Heart right ventricle (tissue), 16 donors: ENCODE measurements at regions of chr9 and their contacts with region 1.

Region 1: DNA sequence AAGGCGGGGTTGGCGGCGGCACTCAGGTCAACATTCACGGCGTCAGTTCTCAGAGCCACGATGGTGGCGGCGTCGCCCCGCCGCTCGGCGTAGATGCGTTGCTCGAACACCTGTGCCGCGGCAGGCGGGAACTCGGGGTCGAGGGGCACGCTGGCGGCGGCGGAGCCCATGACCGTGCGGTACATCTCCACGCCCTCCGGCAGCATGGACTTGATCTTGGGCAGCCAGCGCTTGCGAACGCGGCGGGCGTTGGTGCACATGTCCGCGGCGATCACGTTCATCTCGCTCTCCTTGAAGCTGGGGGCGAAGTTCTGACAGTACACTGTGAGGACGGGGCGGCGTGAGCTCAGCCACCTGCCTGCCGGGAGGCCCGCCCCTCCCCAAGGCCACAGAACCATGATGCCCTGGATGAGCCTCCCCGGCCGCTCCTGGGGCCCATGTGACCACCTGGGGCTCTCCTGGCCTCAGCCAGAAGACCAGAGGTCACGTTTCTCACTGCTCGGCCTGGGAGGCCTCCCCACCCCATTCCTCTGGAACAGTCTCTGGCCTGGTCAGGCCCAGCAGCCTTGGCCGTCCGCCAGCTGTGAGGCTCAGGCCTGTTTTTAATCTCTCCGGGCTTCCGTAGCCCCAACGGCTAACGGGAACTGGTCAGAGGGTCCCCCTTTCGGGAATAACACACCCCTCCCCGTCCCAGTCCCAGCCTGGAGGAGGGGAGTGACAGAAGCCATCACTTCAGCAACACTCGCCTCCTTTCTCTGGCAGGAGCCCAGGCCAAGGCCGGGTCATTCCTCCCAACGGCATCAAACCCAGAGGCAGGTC is 50.7 kb upstream of the UBAC1 start:
- DNase-seq: peak; percentile 88 to 89
- ATAC-seq: peak; percentile 69 to 88 (median 81)
- H3K4me3 ChIP-seq: peak overlapping the region in 5 of 10 donors; percentile 17 to 33 (median 32)
- H3K27ac ChIP-seq: peak overlapping the region; percentile 7 to 90 (median 78)
- H3K4me1 ChIP-seq: peaks cover 7 to 62% (median 28%) of the 10 kb centered on the region in 9 donors
- H3K27me3 ChIP-seq: no peaks in the 10 kb centered on the region
- CTCF ChIP-seq: no peak

Region 2: DNA sequence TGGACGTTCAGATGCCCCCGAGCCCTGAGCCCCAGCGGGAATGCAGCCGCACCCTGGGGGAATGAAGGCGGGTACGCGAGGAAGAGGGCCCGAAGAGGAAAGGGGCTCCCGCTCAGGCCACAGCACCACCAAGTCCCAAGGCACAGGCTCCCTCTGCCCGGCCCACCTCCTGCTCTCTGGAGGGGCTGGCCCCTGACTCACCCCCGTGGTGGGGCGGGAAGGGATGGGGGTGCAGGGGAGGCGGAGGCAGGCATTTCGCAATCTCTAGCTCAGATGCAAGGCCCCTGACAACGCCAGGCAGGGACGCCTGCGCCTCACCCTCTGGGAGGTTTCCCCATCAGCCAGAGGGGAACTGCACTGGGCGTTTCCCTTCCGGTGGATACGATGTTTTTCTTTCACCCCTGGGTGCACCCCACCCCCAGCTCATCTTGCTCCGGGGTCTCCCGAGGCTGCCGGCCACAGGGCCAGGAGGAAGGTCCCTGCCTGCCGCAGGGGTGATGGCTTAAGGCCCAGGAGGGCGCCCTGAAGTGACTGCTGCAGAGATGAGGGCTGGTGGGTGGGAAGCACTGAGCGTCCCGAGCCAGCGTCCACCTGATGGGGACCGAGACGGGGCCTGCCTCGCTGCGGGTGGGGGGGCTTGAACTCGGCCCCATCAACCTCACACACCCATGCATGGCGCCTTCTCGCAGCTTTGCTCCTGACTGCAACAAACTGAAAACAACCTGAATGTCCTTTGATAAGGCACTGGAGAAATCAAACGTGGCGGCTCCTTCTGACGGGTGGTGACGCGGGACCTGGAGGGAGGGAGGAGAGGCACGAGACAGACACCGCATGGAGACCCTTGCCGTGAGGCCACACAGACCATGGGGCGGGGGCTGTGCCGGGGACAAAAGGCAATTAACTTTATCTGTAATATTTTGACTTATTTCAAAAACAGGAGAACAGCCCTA is 34.3 kb after region 1 on chr9:
- intact Hi-C with region 1: loop called in 1 of 10 experiments (anchors 5 kb)
- DNase-seq: no peak
- ATAC-seq: peak in 2 of 8 donors; percentile 22
- H3K4me3 ChIP-seq: peak overlapping the region in 1 of 10 donors; percentile 25
- H3K27ac ChIP-seq: peak overlapping the region in 2 of 10 donors; percentile 64 to 68
- H3K4me1 ChIP-seq: peaks cover 3 to 71% (median 25%) of the 10 kb centered on the region in 9 donors
- H3K27me3 ChIP-seq: no peaks in the 10 kb centered on the region
- CTCF ChIP-seq: no peak

Region 3: DNA sequence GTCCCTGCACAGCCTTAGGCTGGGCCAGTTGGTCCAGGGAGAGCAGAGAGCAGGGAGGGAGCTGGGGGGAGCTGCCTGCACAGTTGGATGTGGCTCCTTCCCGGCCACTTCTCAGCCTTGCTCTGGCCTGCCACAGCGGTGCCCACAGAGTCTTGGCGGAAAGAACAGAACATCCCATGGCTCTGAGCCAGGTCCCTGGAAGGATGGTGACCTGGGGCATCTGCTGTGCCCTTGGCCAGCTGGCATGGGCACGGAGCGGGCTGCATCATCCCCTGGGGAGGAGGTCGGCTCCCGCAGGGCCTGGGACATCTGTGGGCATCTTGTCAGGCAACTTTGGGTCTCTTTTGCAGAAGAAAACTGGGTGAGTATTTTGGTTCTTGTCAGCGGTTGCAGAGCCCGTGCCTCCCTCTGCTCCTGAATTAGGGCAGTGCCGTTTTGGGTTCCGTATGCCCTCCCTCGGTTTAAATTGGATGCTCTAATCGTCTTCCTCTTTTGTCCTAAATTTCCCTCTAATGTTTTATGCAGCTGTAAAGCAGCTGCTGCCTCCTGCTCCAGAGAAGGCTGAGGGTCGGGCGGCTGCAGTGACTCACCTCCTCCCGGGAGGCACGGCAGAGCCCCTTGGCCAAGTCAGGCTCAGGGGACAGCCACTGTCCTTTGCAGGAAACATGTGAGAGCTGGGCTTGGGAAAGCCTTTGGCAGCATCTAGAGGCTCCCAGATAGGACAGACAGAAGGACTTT is 93.7 kb after region 1 on chr9:
- intact Hi-C with region 1: no loop called
- DNase-seq: peak; percentile 79 to 82
- ATAC-seq: peak; percentile 7 to 65 (median 50)
- H3K4me3 ChIP-seq: peak overlapping the region in 3 of 10 donors; percentile 6 to 19 (median 15)
- H3K27ac ChIP-seq: peak overlapping the region in 8 of 10 donors; percentile 6 to 78 (median 62)
- H3K4me1 ChIP-seq: peaks cover 34 to 71% (median 65%) of the 10 kb centered on the region in 9 donors
- H3K27me3 ChIP-seq: peaks cover 0 to 4% (median 0%) of the 10 kb centered on the region in 7 donors
- CTCF ChIP-seq: peak in 1 of 9 donors; percentile 11